AG04449 (cell line): ENCODE measurements at regions of chr1 and their contacts with region 1.

Region 1: DNA sequence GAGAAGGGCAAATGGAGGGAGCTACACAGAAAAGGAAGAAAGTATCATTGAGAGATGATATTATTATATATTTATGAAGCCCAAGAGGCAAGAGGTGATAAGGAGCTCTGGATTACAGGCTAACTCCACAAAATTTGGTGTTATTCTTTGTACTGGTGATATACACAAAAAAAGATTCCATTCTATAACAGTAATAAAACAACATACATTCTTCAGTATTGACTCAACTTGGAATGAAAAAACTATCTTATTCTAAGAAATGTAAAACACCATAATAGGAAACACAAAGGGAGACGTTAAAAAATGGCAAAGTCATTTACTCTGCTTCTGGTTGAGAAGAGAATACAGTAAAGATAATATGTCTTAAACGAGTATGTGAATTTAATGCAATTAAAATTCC is 99.4 kb downstream of the TEX35 start:
- DNase-seq: no peak
- H3K4me3 ChIP-seq: no peak overlapping the region
- CTCF ChIP-seq: no peak

Region 2: DNA sequence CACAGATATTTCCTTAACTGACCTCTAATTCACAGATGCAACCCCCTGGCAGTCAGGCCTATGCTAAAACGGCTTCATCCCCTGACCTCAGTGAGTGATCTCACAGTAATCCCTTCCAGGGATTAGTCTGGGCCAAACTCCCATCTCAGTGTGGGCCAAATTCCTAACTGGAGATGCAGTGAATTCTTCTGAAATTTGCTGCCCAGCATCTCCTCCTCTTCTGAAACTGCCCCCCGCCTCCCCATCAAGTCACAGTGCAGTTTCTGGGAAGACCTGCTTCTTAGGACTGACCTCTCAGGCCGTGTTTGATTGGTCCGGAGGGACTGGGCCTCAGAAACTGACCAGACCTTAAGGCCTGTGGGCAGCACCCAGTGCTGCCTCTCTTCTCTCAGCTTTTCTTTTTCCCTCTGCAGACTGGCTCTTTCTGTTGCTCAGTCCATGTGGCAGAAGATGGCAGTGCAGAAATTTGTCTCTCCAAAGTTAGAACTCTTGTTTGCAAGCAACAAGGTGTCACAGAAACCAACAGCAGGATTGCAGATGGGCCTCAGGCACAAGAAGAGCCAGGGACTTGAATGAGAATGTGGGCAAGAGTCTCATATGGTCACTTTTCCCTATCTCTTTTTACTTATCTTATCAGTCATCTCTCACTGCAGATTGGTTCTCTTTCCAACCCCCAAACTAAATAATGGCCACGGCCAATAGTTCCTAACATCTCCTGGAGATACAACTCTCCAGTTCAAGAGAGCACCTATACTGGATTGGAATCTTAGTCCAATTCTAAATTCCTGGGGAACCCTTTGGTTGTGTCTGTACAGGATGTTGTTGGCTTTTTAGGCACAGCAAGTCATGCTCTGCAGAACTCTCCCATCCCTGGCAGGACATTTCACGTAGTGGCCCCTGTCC is 17.2 kb after region 1 on chr1:
- CTCF ChIA-PET with region 1: interaction called, 10 read pairs
- POLR2A ChIA-PET with region 1: interaction called, 8 read pairs
- DNase-seq: no peak
- H3K4me3 ChIP-seq: no peak overlapping the region
- CTCF ChIP-seq: peak; percentile 9